Breast epithelium (tissue), 4 donors: ENCODE measurements at regions of chr3 and their contacts with region 1.

Region 1: GRCh38 chr3:20724241-20724640 is 538.2 kb upstream of the SGO1 start:
- DNase-seq: no peak
- H3K4me3 ChIP-seq: no peak overlapping the region
- H3K27ac ChIP-seq: no peak overlapping the region
- H3K4me1 ChIP-seq: no peaks in the 10 kb centered on the region
- H3K27me3 ChIP-seq: no peaks in the 10 kb centered on the region
- CTCF ChIP-seq: no peak
- POLR2A ChIP-seq: no peak

Region 2: GRCh38 chr3:20760981-20761380 is 36.7 kb after region 1 on chr3:
- intact Hi-C with region 1: loop called (anchors 2 kb)
- DNase-seq: no peak
- H3K4me3 ChIP-seq: no peak overlapping the region
- H3K27ac ChIP-seq: no peak overlapping the region
- H3K4me1 ChIP-seq: no peaks in the 10 kb centered on the region
- H3K27me3 ChIP-seq: no peaks in the 10 kb centered on the region
- CTCF ChIP-seq: no peak
- POLR2A ChIP-seq: no peak